Endothelial cell of umbilical vein (primary cell): ENCODE measurements at regions of chr11 and their contacts with region 1.

Region 1: DNA sequence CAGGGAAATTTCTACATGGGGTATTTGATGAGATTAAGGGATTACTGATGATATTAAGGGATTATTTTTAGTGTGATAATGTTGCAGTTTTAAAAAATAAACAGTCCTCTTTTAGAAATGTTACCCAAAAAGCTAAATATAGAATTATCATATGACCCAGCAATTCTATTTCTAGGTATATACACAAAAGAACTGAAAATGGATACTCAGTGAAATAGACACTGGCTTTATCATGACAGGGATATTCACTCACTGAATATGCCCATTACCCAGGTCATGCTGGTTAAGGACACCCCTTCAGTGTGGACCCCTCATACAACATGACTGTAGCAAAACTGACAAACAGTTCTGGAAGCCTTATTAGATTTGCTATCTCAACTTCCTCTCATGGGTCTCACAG is 27.8 kb downstream of the USP28 start:
- DNase-seq: no peak
- H3K4me3 ChIP-seq: no peak overlapping the region
- H3K27ac ChIP-seq: no peak overlapping the region
- H3K4me1 ChIP-seq: no peaks in the 10 kb centered on the region
- H3K27me3 ChIP-seq: no peaks in the 10 kb centered on the region
- CTCF ChIP-seq: no peak
- POLR2A ChIP-seq: no peak

Region 2: GRCh38 chr11:113828191-113828590 is 19.4 kb before region 1 on chr11:
- CTCF ChIA-PET with region 1: no interaction called
- POLR2A ChIA-PET with region 1: no interaction called
- dilution Hi-C with region 1: no loop called
- intact Hi-C with region 1: loop called (anchors 2 kb)
- DNase-seq: no peak
- H3K4me3 ChIP-seq: no peak overlapping the region
- H3K27ac ChIP-seq: no peak overlapping the region
- H3K4me1 ChIP-seq: no peaks in the 10 kb centered on the region
- H3K27me3 ChIP-seq: no peaks in the 10 kb centered on the region
- CTCF ChIP-seq: no peak
- POLR2A ChIP-seq: no peak